ENCODE measurements at regions of chr7 and their contacts with region 1.

Region 1: DNA sequence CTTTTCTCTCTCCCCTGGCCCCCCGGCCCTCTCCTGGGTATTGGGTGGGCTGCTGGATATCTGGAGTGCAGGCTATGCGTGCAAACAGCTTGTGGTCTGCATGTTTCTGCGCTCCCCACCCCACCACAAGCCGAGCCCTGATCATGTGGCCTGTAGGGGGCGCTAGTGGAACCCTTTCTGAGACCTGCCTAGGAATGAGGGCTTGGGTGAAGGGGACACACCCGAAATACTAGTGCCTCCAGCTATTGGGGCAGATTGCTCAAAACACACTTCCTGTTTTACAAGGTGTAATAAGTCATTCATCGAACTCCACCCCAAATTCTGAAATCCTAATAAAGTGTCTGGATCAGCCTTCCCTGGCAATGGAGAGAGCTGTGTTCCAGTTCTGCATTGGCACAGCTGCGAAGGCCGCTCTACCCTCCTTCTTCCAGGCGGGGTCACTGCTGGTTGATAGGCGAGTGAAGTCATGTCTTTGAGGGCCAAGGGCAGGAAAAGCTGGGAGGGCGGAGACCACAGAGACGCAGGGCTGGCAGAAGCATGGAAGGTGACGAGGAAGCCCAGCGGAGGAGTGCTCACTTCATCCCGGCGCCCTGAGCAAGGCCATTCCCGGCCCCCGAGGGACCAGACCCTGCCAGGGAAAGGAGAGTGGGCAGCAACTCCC is 19.8 kb upstream of the PRRT4 start:
- DNase-seq: peak; percentile 54
- H3K4me3 Mint-ChIP-seq: no peak overlapping the region
- H3K27ac Mint-ChIP-seq: no peak overlapping the region
- H3K4me1 Mint-ChIP-seq: no peaks in the 10 kb centered on the region
- H3K27me3 Mint-ChIP-seq: peaks cover 22% of the 10 kb centered on the region

Region 2: DNA sequence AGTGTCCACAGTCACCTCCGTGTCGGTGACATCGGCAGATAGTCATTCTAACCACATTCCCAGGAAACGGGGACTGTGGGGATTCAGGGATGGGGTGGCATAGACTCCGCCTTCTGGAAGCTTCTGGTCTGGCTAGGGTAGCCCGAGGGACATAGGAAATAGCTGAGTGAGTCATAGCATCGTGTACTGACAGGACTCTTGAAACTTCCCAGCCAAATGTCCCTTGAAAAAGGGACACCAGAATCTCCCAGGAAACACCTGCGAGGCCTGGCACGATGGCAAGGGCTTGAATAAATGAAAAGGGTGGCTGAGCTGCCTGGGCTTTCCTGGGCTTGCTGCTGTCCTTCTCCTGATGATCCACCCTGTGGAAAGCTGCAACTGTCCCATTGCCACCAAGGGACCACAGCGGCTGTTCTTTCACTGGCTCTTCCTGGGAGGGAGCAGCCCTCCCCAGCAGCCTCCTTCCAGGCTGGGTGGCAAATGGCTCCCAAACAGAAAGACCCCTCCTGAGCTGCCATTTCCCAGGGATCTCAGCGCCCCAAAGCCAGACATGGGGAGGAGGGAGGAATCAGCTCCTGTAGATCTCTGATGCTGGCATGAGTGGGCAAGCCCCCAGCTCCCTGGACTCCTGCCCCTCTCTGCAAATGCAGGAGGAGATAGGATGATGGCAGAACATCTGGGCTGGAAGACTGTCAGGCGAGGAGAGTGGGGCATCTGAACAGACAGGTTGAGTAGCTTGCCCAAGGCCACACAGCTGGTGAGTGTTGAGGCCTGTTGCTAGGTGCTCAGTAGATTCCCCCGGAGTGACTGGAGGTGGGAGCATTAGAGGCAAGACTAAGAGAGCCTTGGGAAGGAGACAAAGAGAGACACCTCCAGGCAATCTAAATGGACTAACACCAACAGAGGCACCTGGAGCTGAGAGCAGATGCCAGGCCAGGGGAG is 265.6 kb before region 1 on chr7:
- CTCF ChIA-PET with region 1: no interaction called
- DNase-seq: no peak
- H3K4me3 Mint-ChIP-seq: no peak overlapping the region
- H3K27ac Mint-ChIP-seq: no peak overlapping the region
- H3K4me1 Mint-ChIP-seq: peaks cover 31% of the 10 kb centered on the region
- H3K27me3 Mint-ChIP-seq: peaks cover 29% of the 10 kb centered on the region

Region 3: DNA sequence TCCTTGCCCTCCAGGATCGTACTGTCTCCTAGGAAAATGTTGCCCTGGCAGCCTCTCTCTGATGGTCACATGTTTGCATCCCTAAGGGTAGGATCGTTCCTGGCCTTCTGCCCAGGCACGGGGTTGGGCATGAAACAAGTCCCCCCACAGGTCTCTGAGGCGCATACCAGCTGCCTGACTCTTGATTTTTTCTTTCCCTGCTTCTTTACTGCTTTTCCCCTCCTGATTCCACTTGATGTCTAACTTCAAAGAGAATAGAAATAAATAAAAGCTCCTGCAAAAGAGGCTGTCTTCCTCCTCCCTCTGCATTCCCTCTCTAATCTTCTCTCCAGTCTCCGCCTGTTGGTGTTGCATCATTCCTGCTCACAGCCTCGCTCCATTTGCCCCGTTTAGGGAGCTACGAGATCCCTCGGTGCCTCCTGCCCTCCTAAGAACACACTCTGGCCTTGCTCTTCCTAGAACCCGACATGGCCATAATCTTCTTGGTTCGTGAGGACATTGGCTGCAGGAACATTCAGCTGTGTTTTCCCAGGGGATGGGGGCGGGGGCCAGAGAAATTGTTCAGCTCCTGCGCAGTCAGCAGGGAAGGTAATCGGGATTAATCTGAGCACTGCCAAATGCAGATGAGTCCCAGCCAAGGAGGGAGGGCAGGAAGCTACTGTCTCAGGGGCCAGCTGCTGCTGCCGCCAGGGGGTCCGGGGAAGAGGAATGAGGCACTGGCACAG is 114.2 kb before region 1 on chr7:
- CTCF ChIA-PET with region 1: no interaction called
- DNase-seq: no peak
- H3K4me3 Mint-ChIP-seq: no peak overlapping the region
- H3K27ac Mint-ChIP-seq: no peak overlapping the region
- H3K4me1 Mint-ChIP-seq: no peaks in the 10 kb centered on the region
- H3K27me3 Mint-ChIP-seq: peaks cover 74% of the 10 kb centered on the region

Region 4: GRCh38 chr7:128299109-128299607 is 82.1 kb before region 1 on chr7:
- CTCF ChIA-PET with region 1: no interaction called
- DNase-seq: no peak
- H3K4me3 Mint-ChIP-seq: no peak overlapping the region
- H3K27ac Mint-ChIP-seq: no peak overlapping the region
- H3K4me1 Mint-ChIP-seq: no peaks in the 10 kb centered on the region
- H3K27me3 Mint-ChIP-seq: no peaks in the 10 kb centered on the region

Region 5: GRCh38 chr7:128343554-128344430 is 37.5 kb before region 1 on chr7 and contains the start of gene RBM28:
- CTCF ChIA-PET with region 1: interaction called, 183 read pairs
- DNase-seq: peak; percentile 90
- H3K4me3 Mint-ChIP-seq: peak within 1 kb of the TSS; percentile 88
- H3K27ac Mint-ChIP-seq: peak within 1 kb of the TSS; percentile 92
- H3K4me1 Mint-ChIP-seq: peaks cover 26% of the 10 kb centered on the region
- H3K27me3 Mint-ChIP-seq: peaks cover 11% of the 10 kb centered on the region

Region 6: GRCh38 chr7:129224251-129225205 is 843.2 kb after region 1 on chr7 and contains the start of gene AHCYL2:
- CTCF ChIA-PET with region 1: no interaction called
- DNase-seq: peak; percentile 99
- H3K4me3 Mint-ChIP-seq: peak within 1 kb of the TSS; percentile 92
- H3K27ac Mint-ChIP-seq: peak within 1 kb of the TSS; percentile 88
- H3K4me1 Mint-ChIP-seq: peaks cover 36% of the 10 kb centered on the region
- H3K27me3 Mint-ChIP-seq: peaks cover 4% of the 10 kb centered on the region

Measured in activated naive CD4-positive, alpha-beta T cell treated with anti-CD3 and anti-CD28 coated beads, Interleukin-2, amount 10 ng/mL, durations not matched to agents 7 days and 5 days (primary cell).